Heart left ventricle (tissue), 16 donors: ENCODE measurements at regions of chr19 and their contacts with region 1.

Region 1: GRCh38 chr19:47663841-47664771 is 49.1 kb upstream of the EHD2 start:
- DNase-seq: peak in 4 of 5 donors; percentile 76 to 88 (median 80)
- ATAC-seq: peak; percentile 79 to 86 (median 86)
- H3K4me3 ChIP-seq: peak overlapping the region in 4 of 12 donors; percentile 2 to 33 (median 8)
- H3K27ac ChIP-seq: peak overlapping the region; percentile 78 to 97 (median 90)
- H3K4me1 ChIP-seq: peaks cover 3 to 79% (median 47%) of the 10 kb centered on the region in 12 donors
- H3K27me3 ChIP-seq: no peaks in the 10 kb centered on the region
- CTCF ChIP-seq: no peak
- POLR2A ChIP-seq: peak in 1 of 2 donors; percentile 29

Region 2: GRCh38 chr19:47608074-47608918 is 55.8 kb before region 1 on chr19:
- intact Hi-C with region 1: loop called in 6 of 10 experiments (anchors 2 to 10 kb)
- DNase-seq: peak; percentile 95 to 97 (median 96)
- ATAC-seq: peak; percentile 92 to 95 (median 94)
- H3K4me3 ChIP-seq: peak overlapping the region; percentile 86 to 100 (median 98)
- H3K27ac ChIP-seq: peak overlapping the region; percentile 96 to 100 (median 99)
- H3K4me1 ChIP-seq: peaks cover 2 to 48% (median 30%) of the 10 kb centered on the region in 12 donors
- H3K27me3 ChIP-seq: no peaks in the 10 kb centered on the region
- CTCF ChIP-seq: peak in 7 of 12 donors; percentile 16 to 43 (median 30)
- POLR2A ChIP-seq: peak in 1 of 2 donors; percentile 88

Region 3: DNA sequence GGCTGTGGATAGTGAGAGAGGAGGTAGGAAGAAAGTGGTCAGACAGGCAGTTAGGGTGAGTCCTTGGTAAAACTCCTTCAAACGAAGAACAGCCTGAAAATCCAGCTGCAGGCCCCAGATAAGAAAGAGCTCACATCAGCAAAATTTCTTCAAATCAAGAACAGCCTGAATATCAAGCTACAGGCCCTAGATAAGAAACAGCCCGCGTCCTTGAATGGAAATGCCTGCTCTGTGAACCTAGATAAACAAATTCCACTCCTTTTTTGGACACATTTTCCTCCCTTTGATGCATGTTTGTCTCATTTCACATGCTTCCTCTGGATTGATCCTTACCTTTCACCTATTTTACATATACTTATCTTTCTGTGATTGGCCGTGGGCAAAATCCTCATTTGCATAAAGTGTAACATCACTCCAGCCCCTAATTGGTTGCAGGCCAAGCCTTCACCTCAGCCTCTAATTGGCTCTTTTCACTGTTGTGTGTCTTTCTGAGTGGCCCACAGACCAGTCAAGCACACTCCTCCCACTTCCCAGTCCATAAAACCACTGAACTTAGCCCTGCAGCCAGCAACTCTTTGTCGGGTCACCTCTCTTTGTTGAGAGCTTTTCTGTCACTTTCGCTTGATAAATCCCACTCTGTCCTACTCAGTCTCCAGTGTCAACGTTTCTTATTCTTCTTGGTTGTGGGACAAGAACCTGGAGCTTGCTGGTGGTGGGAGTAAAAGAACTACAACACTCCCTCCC is 228.0 kb after region 1 on chr19:
- intact Hi-C with region 1: no loop called
- DNase-seq: no peak
- ATAC-seq: no peak
- H3K4me3 ChIP-seq: no peak overlapping the region
- H3K27ac ChIP-seq: no peak overlapping the region
- H3K4me1 ChIP-seq: no peaks in the 10 kb centered on the region
- H3K27me3 ChIP-seq: peaks cover 0 to 5% (median 0%) of the 10 kb centered on the region in 9 donors
- CTCF ChIP-seq: no peak
- POLR2A ChIP-seq: no peak